ENCODE measurements at regions of chr19 and their contacts with region 1.

Region 1: GRCh38 chr19:57279418-57280066 is 743 bp upstream of the ZNF460 start:
- DNase-seq: peak; percentile 95
- H3K4me3 ChIP-seq: peak overlapping the region; percentile 88
- H3K27ac ChIP-seq: peak overlapping the region; percentile 94
- H3K4me1 ChIP-seq: peaks cover 26% of the 10 kb centered on the region
- CTCF ChIP-seq: peak; percentile 53

Region 2: GRCh38 chr19:56314562-56315077 is 964.9 kb before region 1 on chr19 and contains the start of gene ZSCAN5A:
- CTCF ChIA-PET with region 1: no interaction called
- POLR2A ChIA-PET with region 1: no interaction called
- intact Hi-C with region 1: loop called (anchors 5 kb)
- DNase-seq: peak; percentile 94
- H3K4me3 ChIP-seq: peak within 1 kb of the TSS; percentile 75
- H3K27ac ChIP-seq: peak within 1 kb of the TSS; percentile 78
- H3K4me1 ChIP-seq: peaks cover 15% of the 10 kb centered on the region
- CTCF ChIP-seq: no peak
- total RNA-seq, gene ZSCAN5A: 9.9 and 19.2 TPM in 2 replicates

Region 3: GRCh38 chr19:57240311-57241090 is 39.0 kb before region 1 on chr19 and contains the start of gene ZNF805:
- CTCF ChIA-PET with region 1: no interaction called
- POLR2A ChIA-PET with region 1: no interaction called
- intact Hi-C with region 1: loop called (anchors 1 kb)
- DNase-seq: peak; percentile 95
- H3K4me3 ChIP-seq: peak within 1 kb of the TSS; percentile 89
- H3K27ac ChIP-seq: peak within 1 kb of the TSS; percentile 58
- H3K4me1 ChIP-seq: peaks cover 20% of the 10 kb centered on the region
- CTCF ChIP-seq: no peak
- total RNA-seq, gene ZNF805: 12.2 and 14.9 TPM in 2 replicates

Region 4: DNA sequence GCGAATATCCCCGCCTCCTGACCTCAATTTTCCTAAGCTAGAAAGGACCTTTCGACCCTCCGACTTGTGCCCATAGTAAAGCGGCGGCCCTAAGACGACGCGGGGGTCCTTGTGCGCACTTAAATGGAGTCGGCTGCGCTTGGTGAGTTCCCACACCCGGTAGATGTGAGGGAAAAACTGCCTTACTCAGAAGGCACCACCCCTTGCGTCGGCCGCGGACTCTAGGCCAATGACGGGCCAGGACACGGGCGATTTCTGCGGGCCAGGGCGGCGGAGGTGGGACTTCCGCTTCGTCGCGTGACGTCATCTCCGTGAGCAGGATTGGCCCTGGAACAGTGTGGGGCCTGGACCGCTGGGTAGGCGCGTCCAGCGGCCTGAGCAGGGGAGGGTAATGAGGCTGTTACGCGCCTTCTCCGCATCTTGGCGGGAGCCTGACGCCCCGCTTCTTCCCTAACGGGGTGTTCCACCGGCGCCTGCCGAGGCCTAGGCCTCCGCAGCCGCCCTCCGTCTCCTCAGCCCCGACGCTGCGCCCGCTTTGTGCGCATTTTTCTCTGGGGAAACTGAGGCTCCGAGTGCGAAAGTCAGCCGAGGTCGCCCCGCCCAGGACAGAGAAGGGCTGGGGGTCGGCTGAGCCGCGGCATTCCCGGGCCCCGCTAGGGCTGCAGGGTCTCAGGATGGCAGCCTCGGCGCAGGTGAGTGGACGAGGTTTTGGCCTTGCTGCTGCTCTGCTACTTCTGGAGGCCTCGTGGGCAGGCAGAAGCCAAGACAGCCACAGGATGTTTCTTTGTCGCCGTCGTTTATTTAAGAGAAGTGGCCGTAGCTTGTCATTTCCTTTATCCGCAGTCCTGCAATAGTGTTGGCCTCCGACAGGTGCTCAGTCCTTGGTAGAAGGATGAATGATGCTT is 40.9 kb after region 1 on chr19 and contains the start of gene ZNF543:
- CTCF ChIA-PET with region 1: no interaction called
- POLR2A ChIA-PET with region 1: no interaction called
- intact Hi-C with region 1: loop called (anchors 5 kb)
- DNase-seq: peak; percentile 96
- H3K4me3 ChIP-seq: peak within 1 kb of the TSS; percentile 87
- H3K27ac ChIP-seq: peak within 1 kb of the TSS; percentile 57
- H3K4me1 ChIP-seq: peaks cover 23% of the 10 kb centered on the region
- CTCF ChIP-seq: no peak
- total RNA-seq, gene ZNF543: 11.5 and 14.6 TPM in 2 replicates

Region 5: DNA sequence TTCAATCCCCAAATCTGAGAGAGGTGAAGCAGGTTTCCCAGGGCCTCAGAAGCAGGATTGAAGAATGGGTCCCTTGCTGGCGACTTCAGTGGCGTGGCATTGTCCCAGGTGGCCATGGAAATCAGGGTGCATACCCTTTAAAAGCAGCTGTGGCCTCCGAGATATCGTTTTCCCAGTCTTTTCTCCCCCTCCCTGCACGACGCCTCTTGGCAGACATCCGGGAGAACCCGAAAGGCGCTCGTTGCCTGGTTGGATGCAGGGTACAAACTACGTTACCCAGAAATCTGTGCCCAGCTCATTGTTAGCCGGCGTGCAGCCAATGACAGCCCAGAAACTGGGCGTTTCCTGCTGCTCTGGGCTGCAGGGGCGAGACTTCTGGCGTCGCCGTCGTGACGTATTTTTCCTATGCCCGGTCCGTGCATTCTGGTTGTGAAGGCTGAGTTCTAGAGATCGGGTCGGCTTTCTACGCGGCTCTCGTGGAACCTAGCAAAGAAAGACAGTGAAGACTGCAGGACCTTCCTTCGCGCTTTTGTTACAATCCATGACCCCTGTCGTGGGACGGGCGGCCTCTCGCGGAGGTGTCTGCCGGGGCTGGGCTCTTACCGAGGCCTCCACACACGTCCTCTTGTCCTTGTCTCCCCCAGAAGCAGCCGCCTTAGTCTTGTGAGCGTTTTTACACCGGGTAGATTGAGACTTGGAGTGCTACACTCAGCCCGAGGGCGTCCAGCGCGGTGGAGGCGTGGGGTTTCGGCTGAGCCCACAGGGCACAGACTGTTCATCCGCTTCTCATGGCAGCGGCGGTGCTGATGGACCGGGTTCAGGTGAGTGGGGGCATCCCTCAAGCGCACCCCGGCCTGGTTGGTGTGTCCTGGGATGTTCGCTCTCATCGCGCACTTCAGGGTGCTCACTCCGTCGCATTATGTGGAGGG is 71.6 kb after region 1 on chr19 and contains the start of gene ZNF304:
- CTCF ChIA-PET with region 1: no interaction called
- POLR2A ChIA-PET with region 1: interaction called, 3 read pairs
- intact Hi-C with region 1: loop called (anchors 1 kb)
- DNase-seq: peak; percentile 93
- H3K4me3 ChIP-seq: peak within 1 kb of the TSS; percentile 98
- H3K27ac ChIP-seq: no peak within 1 kb of the TSS
- H3K4me1 ChIP-seq: peaks cover 14% of the 10 kb centered on the region
- CTCF ChIP-seq: no peak
- total RNA-seq, gene ZNF304: 5.0 and 6.8 TPM in 2 replicates